Activated CD4-positive, alpha-beta memory T cell treated with anti-CD3 and anti-CD28 coated beads for 36 hours (primary cell): ENCODE measurements at regions of chr18 and their contacts with region 1.

Region 1: GRCh38 chr18:80034068-80034851 is at the start of gene RBFA:
- DNase-seq: peak; percentile 100
- H3K4me3 Mint-ChIP-seq: peak within 1 kb of the TSS; percentile 89
- H3K27ac Mint-ChIP-seq: peak within 1 kb of the TSS; percentile 82
- H3K4me1 Mint-ChIP-seq: peaks cover 22% of the 10 kb centered on the region
- H3K27me3 Mint-ChIP-seq: no peaks in the 10 kb centered on the region
- total RNA-seq, gene RBFA: 29.5 to 31.8 TPM

Region 2: GRCh38 chr18:79393635-79394533 is 640.4 kb before region 1 on chr18:
- CTCF ChIA-PET with region 1: no interaction called
- POLR2A ChIA-PET with region 1: no interaction called
- intact Hi-C with region 1: loop called (anchors 5 kb)
- DNase-seq: peak; percentile 67
- H3K4me3 Mint-ChIP-seq: peak overlapping the region; percentile 77
- H3K27ac Mint-ChIP-seq: peak overlapping the region; percentile 74
- H3K4me1 Mint-ChIP-seq: peaks cover 25% of the 10 kb centered on the region
- H3K27me3 Mint-ChIP-seq: peaks cover 4% of the 10 kb centered on the region

Region 3: GRCh38 chr18:79439201-79440023 is 594.8 kb before region 1 on chr18:
- CTCF ChIA-PET with region 1: no interaction called
- POLR2A ChIA-PET with region 1: no interaction called
- intact Hi-C with region 1: no loop called
- DNase-seq: peak; percentile 34
- H3K4me3 Mint-ChIP-seq: no peak overlapping the region
- H3K27ac Mint-ChIP-seq: no peak overlapping the region
- H3K4me1 Mint-ChIP-seq: peaks cover 57% of the 10 kb centered on the region
- H3K27me3 Mint-ChIP-seq: no peaks in the 10 kb centered on the region

Region 4: DNA sequence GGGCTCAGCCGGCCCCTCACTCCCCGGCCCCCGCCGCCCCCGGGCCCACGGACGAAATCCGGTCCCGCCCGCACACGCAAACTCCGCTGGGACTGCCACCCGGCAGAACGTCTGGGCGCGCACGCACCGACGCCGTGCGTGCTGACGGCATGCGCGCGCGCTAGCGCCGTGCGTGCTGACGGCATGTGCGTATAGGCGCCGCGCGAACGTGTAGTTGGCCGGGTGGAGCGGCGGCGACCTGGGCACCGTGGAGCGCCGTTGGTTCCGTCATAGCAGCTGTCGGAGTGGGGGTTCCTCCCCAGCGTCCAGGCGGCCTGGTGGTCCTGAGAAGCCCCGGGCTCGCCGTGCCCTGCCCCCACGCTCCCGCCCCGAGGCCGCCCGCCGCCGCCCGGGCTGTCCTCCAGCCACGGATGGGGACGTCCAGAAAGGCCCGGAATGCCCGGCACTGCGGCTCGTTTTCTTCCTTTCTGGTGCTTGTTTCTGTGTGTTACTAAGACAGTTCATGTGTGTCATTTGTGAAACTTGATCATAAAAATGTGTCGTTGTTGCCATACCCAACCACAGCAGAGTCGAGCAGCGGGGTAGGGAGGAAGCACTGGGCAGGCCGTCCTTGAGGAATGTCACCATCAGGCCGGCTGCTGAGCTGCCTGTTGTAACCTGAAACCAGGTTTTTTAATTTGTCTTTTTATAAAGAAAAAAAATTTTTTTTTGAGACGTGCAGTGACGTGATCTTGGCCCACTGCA is 45.6 kb before region 1 on chr18 and contains the start of gene TXNL4A:
- CTCF ChIA-PET with region 1: interaction called, 4 read pairs
- POLR2A ChIA-PET with region 1: interaction called, 10 read pairs
- intact Hi-C with region 1: loop called (anchors 1 kb)
- DNase-seq: peak; percentile 90
- H3K4me3 Mint-ChIP-seq: peak within 1 kb of the TSS; percentile 94
- H3K27ac Mint-ChIP-seq: peak within 1 kb of the TSS; percentile 92
- H3K4me1 Mint-ChIP-seq: peaks cover 30% of the 10 kb centered on the region
- H3K27me3 Mint-ChIP-seq: no peaks in the 10 kb centered on the region
- total RNA-seq, gene TXNL4A: 169 to 175 TPM

Region 5: GRCh38 chr18:80147418-80148325 is 113.4 kb after region 1 on chr18:
- CTCF ChIA-PET with region 1: no interaction called
- POLR2A ChIA-PET with region 1: no interaction called
- intact Hi-C with region 1: loop called (anchors 2 kb)
- DNase-seq: peak; percentile 88
- H3K4me3 Mint-ChIP-seq: peak overlapping the region; percentile 82
- H3K27ac Mint-ChIP-seq: peak overlapping the region; percentile 49
- H3K4me1 Mint-ChIP-seq: peaks cover 7% of the 10 kb centered on the region
- H3K27me3 Mint-ChIP-seq: peaks cover 22% of the 10 kb centered on the region